Activated B cell treated with CpG ODN at 0.5 μM for 24 hours (primary cell): ENCODE measurements at regions of chr2 and their contacts with region 1.

Region 1: GRCh38 chr2:136207030-136207623 is 89.2 kb upstream of the CXCR4 start:
- DNase-seq: peak; percentile 57
- ATAC-seq: peak; percentile 66
- H3K4me3 Mint-ChIP-seq: peak overlapping the region; percentile 71
- H3K27ac Mint-ChIP-seq: peak overlapping the region; percentile 97
- H3K4me1 Mint-ChIP-seq: peaks cover 78% of the 10 kb centered on the region
- H3K27me3 Mint-ChIP-seq: no peaks in the 10 kb centered on the region
- CTCF ChIP-seq: no peak

Region 2: GRCh38 chr2:135913727-135914365 is 293.3 kb before region 1 on chr2:
- CTCF ChIA-PET with region 1: interaction called, 4 read pairs
- POLR2A ChIA-PET with region 1: interaction called, 3 read pairs
- intact Hi-C with region 1: loop called (anchors 2 kb)
- DNase-seq: no peak
- ATAC-seq: peak; percentile 64
- H3K4me3 Mint-ChIP-seq: no peak overlapping the region
- H3K27ac Mint-ChIP-seq: no peak overlapping the region
- H3K4me1 Mint-ChIP-seq: peaks cover 6% of the 10 kb centered on the region
- H3K27me3 Mint-ChIP-seq: no peaks in the 10 kb centered on the region
- CTCF ChIP-seq: peak; percentile 87

Region 3: DNA sequence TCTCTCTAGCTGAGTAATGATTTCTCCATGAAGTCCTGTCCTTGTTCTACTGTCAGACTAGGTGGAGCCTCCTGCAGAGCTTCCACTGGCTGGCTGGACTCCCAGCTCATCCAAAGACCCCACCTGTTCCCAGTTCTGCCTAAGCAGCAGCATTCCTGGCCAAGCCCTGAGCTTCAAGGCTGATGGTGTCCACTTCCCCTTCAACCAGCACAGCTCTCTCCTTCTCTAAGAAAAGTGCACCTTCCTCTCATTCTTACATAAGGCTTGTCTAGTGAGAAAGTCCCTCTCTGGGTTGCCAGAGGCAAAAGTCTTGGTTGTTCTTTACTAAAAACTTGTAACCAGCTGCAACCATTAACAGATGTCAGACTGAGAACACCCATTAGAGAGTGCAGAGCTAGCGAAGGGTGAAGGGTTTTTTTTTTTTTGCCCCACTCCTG is 148.1 kb before region 1 on chr2:
- CTCF ChIA-PET with region 1: no interaction called
- POLR2A ChIA-PET with region 1: interaction called, 7 read pairs
- intact Hi-C with region 1: loop called (anchors 5 kb)
- DNase-seq: no peak
- ATAC-seq: peak; percentile 63
- H3K4me3 Mint-ChIP-seq: peak overlapping the region; percentile 62
- H3K27ac Mint-ChIP-seq: peak overlapping the region; percentile 77
- H3K4me1 Mint-ChIP-seq: peaks cover 76% of the 10 kb centered on the region
- H3K27me3 Mint-ChIP-seq: no peaks in the 10 kb centered on the region
- CTCF ChIP-seq: no peak

Region 4: DNA sequence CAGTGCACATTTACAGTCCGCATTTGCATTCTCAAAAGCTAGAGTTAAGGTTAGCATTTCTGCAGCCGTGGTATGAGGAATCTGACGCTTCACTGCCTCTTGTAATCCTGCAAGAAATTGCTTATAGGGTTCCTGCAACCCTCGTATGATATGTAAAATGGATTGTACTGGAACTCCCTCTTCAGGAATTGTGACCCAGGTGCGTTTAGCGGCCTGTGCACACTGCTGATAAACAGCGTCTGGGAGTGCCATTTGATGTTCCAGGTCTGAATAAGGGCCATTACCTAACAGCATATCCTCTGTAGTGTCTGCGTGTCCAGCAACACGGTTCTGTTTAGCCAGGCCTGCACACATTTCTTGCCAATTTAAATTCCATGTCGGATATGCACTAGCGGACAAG is 131.7 kb before region 1 on chr2:
- CTCF ChIA-PET with region 1: no interaction called
- POLR2A ChIA-PET with region 1: no interaction called
- intact Hi-C with region 1: no loop called
- DNase-seq: no peak
- ATAC-seq: no peak
- H3K4me3 Mint-ChIP-seq: no peak overlapping the region
- H3K27ac Mint-ChIP-seq: no peak overlapping the region
- H3K4me1 Mint-ChIP-seq: peaks cover 29% of the 10 kb centered on the region
- H3K27me3 Mint-ChIP-seq: no peaks in the 10 kb centered on the region
- CTCF ChIP-seq: no peak

Region 5: DNA sequence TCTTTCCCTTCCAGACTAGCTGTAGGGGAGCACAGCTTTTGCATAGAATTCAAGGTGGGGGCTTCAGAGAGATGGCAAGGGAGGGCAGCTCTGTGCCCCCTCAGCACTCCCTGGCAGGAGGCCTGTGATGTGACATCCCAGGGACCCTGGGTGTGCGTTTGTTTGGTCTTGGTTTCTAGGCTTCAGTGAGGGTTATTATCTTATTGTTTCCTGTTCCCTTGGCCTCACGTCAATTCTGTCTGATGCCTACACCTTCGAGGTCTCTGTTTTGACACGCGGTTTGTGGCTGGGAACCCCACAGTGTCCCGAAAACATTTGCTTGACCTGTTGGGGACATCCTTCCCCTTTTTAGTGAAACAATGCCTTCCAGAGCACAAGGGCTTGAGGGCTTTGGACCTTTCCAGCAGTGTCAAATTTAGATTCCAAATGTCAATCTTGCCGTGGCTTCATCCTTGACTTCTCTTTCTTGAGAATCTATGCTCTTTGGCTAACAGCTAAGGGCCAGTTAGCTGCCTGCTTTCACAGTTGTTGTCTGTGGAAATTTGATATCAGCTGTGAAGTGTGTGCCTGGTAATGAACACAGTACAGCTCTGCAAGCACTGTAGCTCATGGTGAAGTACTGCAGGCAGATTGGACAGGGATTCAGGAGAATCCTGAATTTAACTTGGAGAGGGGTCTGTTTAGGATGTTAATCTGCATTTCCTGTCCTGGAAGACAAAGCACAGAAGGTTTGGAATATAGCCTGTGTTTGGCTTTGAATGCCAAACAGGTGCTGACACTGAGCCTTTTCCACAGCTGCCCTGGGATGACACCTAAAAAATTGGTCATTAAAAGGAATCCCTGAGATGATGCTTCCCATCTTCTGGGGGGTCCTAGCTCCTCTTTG is 19.1 kb after region 1 on chr2:
- CTCF ChIA-PET with region 1: interaction called, 3 read pairs
- POLR2A ChIA-PET with region 1: interaction called, 46 read pairs
- intact Hi-C with region 1: loop called (anchors 1 kb)
- DNase-seq: no peak
- ATAC-seq: peak; percentile 77
- H3K4me3 Mint-ChIP-seq: peak overlapping the region; percentile 2
- H3K27ac Mint-ChIP-seq: peak overlapping the region; percentile 87
- H3K4me1 Mint-ChIP-seq: peaks cover 67% of the 10 kb centered on the region
- H3K27me3 Mint-ChIP-seq: no peaks in the 10 kb centered on the region
- CTCF ChIP-seq: no peak

Region 6: DNA sequence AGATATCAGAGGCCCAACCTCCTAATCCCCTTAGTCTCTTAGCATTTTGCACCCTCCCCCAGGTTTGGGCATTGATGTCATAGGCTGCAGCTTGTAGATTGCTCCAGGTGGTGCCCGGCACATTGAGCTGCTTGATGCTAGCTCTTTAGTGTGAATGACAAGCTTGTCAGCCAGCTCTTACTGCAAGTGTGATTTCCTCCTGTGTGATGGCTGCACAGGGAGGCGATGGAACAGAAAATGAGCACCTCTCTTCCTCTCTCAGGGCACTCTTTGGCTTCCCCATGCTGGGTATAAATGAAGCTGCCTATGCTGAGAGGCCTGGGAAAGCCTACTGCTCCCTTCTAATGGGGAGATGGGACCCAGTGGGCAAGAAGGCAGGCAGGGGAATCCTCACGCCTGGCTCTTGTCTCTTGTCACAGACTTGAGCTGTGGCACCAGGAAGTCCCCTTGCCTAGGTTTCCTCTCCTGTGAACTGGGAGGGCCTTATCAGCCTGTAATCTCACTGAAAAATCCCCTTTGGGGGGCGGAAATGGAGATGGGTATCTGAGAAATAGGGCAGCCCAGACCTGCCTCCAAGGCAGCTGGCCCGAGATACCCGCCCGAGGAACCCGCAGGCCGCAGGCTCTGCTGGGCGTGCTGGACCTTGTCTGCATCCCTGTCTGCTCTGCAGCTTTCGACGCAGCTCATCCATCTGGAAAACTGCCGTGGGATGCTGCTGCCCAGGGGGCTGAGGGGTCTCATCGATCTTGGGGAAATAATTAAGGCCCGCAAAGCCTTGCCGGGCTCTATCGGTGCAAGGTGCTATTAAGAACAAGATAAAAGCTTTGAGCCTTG is 74.4 kb after region 1 on chr2:
- CTCF ChIA-PET with region 1: no interaction called
- POLR2A ChIA-PET with region 1: interaction called, 13 read pairs
- intact Hi-C with region 1: loop called (anchors 2 kb)
- DNase-seq: no peak
- ATAC-seq: peak; percentile 76
- H3K4me3 Mint-ChIP-seq: peak overlapping the region; percentile 58
- H3K27ac Mint-ChIP-seq: peak overlapping the region; percentile 73
- H3K4me1 Mint-ChIP-seq: peaks cover 77% of the 10 kb centered on the region
- H3K27me3 Mint-ChIP-seq: no peaks in the 10 kb centered on the region
- CTCF ChIP-seq: no peak

Region 7: GRCh38 chr2:136378712-136379595 is 171.8 kb after region 1 on chr2:
- CTCF ChIA-PET with region 1: interaction called, 7 read pairs
- POLR2A ChIA-PET with region 1: interaction called, 47 read pairs
- intact Hi-C with region 1: loop called (anchors 1 kb)
- DNase-seq: no peak
- ATAC-seq: peak; percentile 40
- H3K4me3 Mint-ChIP-seq: no peak overlapping the region
- H3K27ac Mint-ChIP-seq: peak overlapping the region; percentile 92
- H3K4me1 Mint-ChIP-seq: peaks cover 81% of the 10 kb centered on the region
- H3K27me3 Mint-ChIP-seq: no peaks in the 10 kb centered on the region
- CTCF ChIP-seq: peak; percentile 44